ENCODE measurements at regions of chr6 and their contacts with region 1.

Region 1: GRCh38 chr6:1596088-1596852 is 13.4 kb upstream of the FOXC1 start:
- DNase-seq: peak in 1 of 2 experiments; percentile 43
- ATAC-seq: peak; percentile 73 to 92
- H3K4me3 ChIP-seq: no peak overlapping the region
- H3K27ac ChIP-seq: peak overlapping the region in 1 of 2 experiments; percentile 60; a peak in 1 of 6 replicates
- H3K4me1 ChIP-seq: peaks cover 18% of the 10 kb centered on the region
- CTCF ChIP-seq: peak; percentile 81
- EP300 ChIP-seq: no peak
- POLR2A ChIP-seq: no peak
- RAD21 ChIP-seq: peak; percentile 87 to 88

Region 2: DNA sequence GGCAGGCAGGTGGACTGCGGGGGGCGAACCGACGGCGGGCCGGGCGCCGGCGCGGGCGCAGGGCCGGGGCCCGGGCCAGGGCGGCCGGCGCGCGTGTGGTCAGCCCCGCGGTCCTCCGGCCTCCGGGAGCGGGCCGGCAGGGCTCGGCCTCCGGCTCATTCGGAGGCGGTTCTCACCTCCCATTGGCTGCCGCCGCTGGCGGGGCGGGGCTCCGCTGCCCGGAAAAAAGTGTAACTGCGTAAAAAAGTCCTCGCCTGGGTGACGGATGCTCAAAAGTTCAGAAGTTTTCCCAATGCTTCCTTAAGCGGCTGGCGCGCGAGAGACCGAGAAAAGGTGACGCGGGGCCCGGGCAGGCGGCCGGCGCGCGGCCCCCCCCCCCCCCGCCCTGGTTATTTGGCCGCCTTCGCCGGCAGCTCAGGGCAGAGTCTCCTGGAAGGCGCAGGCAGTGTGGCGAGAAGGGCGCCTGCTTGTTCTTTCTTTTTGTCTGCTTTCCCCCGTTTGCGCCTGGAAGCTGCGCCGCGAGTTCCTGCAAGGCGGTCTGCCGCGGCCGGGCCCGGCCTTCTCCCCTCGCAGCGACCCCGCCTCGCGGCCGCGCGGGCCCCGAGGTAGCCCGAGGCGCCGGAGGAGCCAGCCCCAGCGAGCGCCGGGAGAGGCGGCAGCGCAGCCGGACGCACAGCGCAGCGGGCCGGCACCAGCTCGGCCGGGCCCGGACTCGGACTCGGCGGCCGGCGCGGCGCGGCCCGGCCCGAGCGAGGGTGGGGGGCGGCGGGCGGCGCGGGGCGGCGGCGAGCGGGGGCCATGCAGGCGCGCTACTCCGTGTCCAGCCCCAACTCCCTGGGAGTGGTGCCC is 13.6 kb after region 1 on chr6 and contains the start of gene FOXC1:
- CTCF ChIA-PET with region 1: interaction called, 17 read pairs
- POLR2A ChIA-PET with region 1: no interaction called
- DNase-seq: peak; percentile 86 to 90
- ATAC-seq: peak; percentile 69 to 89
- H3K4me3 ChIP-seq: peak within 1 kb of the TSS; percentile 83
- H3K27ac ChIP-seq: peak within 1 kb of the TSS; percentile 88 to 99
- H3K4me1 ChIP-seq: peaks cover 13% of the 10 kb centered on the region; the same call in 2 of the 3 replicates
- CTCF ChIP-seq: no peak
- EP300 ChIP-seq: no peak
- POLR2A ChIP-seq: peak; percentile 55
- RAD21 ChIP-seq: no peak
- polyA plus RNA-seq, gene FOXC1: 3.7 and 4.7 TPM in 2 replicates

Region 3: DNA sequence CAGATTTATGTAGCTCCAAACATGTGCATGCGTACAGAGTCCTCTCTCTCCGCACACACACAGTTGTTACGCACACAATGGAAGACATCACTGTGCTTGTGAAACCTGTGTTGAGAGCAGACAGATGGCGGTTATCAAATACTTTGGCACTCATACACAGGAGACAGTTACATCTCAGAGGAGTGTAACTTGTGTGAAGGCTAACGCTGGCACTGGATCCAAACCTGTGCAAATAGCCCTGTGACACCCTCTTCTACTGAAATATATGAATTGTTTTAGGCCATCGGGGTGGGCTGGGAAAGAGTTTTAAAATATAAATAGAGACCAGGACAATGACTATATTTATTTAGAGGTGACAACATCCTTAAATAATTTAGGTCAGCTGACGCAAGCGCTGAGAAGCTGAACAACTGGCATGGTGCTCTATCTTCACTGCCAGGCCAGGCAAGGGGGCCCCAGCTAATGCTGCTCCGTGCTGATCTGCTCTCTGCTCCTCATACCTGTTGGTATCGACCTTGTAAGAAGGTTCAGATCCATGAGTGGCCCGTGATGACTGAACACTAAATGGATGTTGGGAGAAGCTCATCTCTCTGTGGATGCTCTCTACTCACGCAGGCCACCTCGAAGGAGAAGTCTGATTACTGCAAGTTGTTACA is 82.9 kb after region 1 on chr6:
- CTCF ChIA-PET with region 1: no interaction called
- POLR2A ChIA-PET with region 1: no interaction called
- DNase-seq: no peak
- ATAC-seq: no peak
- H3K4me3 ChIP-seq: no peak overlapping the region
- H3K27ac ChIP-seq: no peak overlapping the region
- H3K4me1 ChIP-seq: no peaks in the 10 kb centered on the region
- CTCF ChIP-seq: no peak
- EP300 ChIP-seq: no peak
- POLR2A ChIP-seq: no peak
- RAD21 ChIP-seq: no peak

Region 4: GRCh38 chr6:2037237-2037926 is 441.1 kb after region 1 on chr6:
- CTCF ChIA-PET with region 1: no interaction called
- POLR2A ChIA-PET with region 1: no interaction called
- DNase-seq: peak in 1 of 2 experiments; percentile 1
- ATAC-seq: no peak
- H3K4me3 ChIP-seq: no peak overlapping the region
- H3K27ac ChIP-seq: no peak overlapping the region
- H3K4me1 ChIP-seq: no peaks in the 10 kb centered on the region
- CTCF ChIP-seq: no peak
- EP300 ChIP-seq: no peak
- POLR2A ChIP-seq: no peak
- RAD21 ChIP-seq: no peak

Region 5: GRCh38 chr6:2353412-2354137 is 757.3 kb after region 1 on chr6:
- CTCF ChIA-PET with region 1: interaction called, 12 read pairs
- POLR2A ChIA-PET with region 1: no interaction called
- DNase-seq: peak; percentile 33 to 63
- ATAC-seq: peak; percentile 59 to 68; a peak in 3 of 6 replicates
- H3K4me3 ChIP-seq: no peak overlapping the region
- H3K27ac ChIP-seq: no peak overlapping the region
- H3K4me1 ChIP-seq: no peaks in the 10 kb centered on the region
- CTCF ChIP-seq: peak; percentile 73
- EP300 ChIP-seq: no peak
- POLR2A ChIP-seq: no peak
- RAD21 ChIP-seq: peak; percentile 80 to 83

Region 6: DNA sequence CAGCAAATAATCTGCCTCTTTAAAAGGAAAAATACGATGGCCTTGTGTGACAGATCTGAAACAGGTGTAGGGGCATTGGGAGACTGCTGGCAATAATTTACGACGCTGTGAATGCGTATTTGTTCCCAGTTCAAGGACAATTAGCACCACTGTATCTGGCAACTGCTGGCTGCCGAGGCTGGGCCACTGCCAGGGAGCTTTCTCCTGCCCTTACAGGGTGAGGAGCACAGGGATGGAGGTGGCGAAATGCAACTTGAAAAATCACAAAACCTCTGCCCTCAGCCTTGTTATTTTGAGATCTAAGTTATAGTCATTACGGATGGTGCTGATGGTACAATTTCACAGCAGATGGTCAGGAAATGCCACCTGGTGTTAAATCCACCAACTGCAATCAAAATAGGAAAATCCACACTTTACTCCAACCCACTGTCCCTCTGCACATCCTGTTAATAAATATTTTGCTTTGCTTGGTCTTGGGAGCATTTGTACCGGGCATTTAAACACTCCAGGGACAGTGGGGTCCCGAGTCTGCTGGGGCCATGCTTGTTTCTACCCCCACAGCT is 1148.0 kb after region 1 on chr6:
- CTCF ChIA-PET with region 1: interaction called, 32 read pairs
- POLR2A ChIA-PET with region 1: no interaction called
- DNase-seq: peak in 1 of 2 experiments; percentile 29
- ATAC-seq: peak; percentile 64 to 70; a peak in 5 of 6 replicates
- H3K4me3 ChIP-seq: no peak overlapping the region
- H3K27ac ChIP-seq: no peak overlapping the region
- H3K4me1 ChIP-seq: no peaks in the 10 kb centered on the region
- CTCF ChIP-seq: peak; percentile 38
- EP300 ChIP-seq: no peak
- POLR2A ChIP-seq: no peak
- RAD21 ChIP-seq: peak; percentile 35 to 49; a peak in 4 of 5 replicates